Activated CD8-positive, alpha-beta memory T cell treated with anti-CD3 and anti-CD28 coated beads, Interleukin-2, amount 10 ng/mL, durations not matched to agents 7 days and 5 days (primary cell): ENCODE measurements at regions of chr4 and their contacts with region 1.

Region 1: GRCh38 chr4:38902695-38903094 is 35.1 kb downstream of the FAM114A1 start:
- DNase-seq: no peak
- ATAC-seq: peak; percentile 78
- H3K4me3 Mint-ChIP-seq: no peak overlapping the region
- H3K27ac Mint-ChIP-seq: no peak overlapping the region
- H3K4me1 Mint-ChIP-seq: peaks cover 7% of the 10 kb centered on the region
- H3K27me3 Mint-ChIP-seq: peaks cover 11% of the 10 kb centered on the region

Region 2: DNA sequence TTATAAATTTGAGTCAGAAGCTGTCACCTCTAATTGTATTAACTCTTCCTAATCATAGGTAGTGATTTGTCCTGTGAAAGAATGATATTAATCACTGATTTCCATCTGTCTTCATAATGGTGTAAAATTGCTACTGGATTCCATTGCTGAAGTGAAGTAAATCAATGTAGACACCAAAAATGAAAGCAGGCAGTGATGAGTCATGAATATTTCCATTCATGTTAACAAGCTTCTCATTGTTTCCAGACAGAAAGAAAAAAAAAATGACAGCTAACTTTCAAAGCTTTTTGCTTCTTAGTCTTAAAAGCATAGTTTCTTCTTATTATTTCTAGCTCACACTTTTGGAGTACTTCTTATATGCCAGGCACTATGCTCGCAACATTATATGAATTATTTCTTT is 13.6 kb before region 1 on chr4:
- CTCF ChIA-PET with region 1: interaction called, 14 read pairs
- DNase-seq: no peak
- ATAC-seq: peak; percentile 77
- H3K4me3 Mint-ChIP-seq: no peak overlapping the region
- H3K27ac Mint-ChIP-seq: peak overlapping the region; percentile 54
- H3K4me1 Mint-ChIP-seq: peaks cover 14% of the 10 kb centered on the region
- H3K27me3 Mint-ChIP-seq: no peaks in the 10 kb centered on the region

Region 3: DNA sequence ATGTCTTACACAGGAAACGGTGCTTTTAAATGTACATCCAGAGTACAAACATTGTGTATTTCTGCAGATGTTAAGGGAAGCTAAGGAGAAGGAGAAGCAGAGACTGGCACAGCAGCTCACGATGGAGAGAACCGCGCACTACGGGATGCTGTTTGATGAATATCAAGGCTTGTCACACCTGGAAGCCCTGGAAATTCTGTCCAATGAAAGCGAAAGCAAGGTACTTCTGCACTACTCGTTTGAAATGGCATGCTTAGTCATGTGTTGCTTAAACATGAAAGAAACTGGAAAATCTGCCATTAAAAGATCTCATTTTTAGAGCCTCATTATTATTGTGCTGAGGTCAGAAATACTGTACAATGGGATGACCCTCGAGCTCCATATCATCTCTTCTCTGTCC is 12.2 kb after region 1 on chr4:
- CTCF ChIA-PET with region 1: interaction called, 11 read pairs
- DNase-seq: no peak
- ATAC-seq: peak; percentile 57
- H3K4me3 Mint-ChIP-seq: peak overlapping the region; percentile 22
- H3K27ac Mint-ChIP-seq: peak overlapping the region; percentile 41
- H3K4me1 Mint-ChIP-seq: peaks cover 6% of the 10 kb centered on the region
- H3K27me3 Mint-ChIP-seq: no peaks in the 10 kb centered on the region